Prostate gland (tissue), 2 donors: ENCODE measurements at regions of chr16 and their contacts with region 1.

Region 1: GRCh38 chr16:49663081-49664065 is 192.5 kb downstream of the ZNF423 start:
- DNase-seq: no peak
- H3K4me3 ChIP-seq: peak overlapping the region; percentile 4 to 17
- H3K27ac ChIP-seq: peak overlapping the region; percentile 68 to 73
- H3K4me1 ChIP-seq: no peaks in the 10 kb centered on the region
- H3K27me3 ChIP-seq: no peaks in the 10 kb centered on the region
- CTCF ChIP-seq: no peak
- POLR2A ChIP-seq: no peak

Region 2: DNA sequence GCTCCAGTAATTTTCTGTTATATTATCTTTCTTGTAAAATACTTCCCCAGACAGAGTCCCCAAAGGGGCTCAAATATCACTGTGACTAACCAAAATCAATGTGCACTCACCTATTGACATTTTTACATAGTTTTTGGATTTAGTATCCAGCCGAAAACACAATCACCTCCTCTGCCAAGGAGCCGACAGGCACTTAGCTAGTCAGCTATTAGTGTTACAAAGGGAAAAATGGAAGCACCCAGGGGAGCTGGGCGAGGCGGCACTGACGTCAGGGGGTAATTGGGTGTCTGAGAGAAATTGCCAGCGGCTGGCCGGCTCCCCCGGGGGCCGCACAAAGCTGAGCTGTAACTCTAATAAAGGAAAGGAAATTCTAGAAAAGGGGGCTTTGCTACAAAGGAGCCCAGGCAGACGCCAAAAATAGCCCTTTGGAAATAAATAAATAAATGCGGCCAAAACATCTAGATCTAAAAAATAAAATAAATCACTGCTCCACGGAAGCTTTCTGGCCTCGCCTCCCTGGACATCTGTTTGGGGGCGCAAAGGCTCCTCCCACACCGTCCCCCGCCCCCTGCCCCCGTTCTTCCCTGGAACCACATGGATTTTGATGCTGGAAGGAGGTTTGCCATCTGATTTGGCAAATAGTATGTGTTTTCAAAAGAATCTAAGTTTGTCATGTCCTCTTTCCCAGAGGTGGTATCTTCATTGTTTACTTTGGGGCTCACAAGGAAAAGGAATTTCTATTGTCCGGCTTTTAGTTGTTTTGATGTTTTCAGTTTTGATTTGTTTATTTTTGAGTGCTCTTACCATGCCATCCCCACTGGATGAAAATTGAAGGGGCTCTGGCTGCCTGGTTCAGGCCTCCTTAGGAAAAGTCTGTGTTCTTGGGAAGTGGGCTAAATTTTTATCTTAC is 35.8 kb after region 1 on chr16:
- intact Hi-C with region 1: loop called (anchors 5 kb)
- DNase-seq: no peak
- H3K4me3 ChIP-seq: no peak overlapping the region
- H3K27ac ChIP-seq: peak overlapping the region; percentile 8 to 62
- H3K4me1 ChIP-seq: no peaks in the 10 kb centered on the region
- H3K27me3 ChIP-seq: no peaks in the 10 kb centered on the region
- CTCF ChIP-seq: no peak
- POLR2A ChIP-seq: no peak

Region 3: GRCh38 chr16:49712542-49712941 is 49.2 kb after region 1 on chr16:
- intact Hi-C with region 1: no loop called
- DNase-seq: no peak
- H3K4me3 ChIP-seq: no peak overlapping the region
- H3K27ac ChIP-seq: no peak overlapping the region
- H3K4me1 ChIP-seq: no peaks in the 10 kb centered on the region
- H3K27me3 ChIP-seq: no peaks in the 10 kb centered on the region
- CTCF ChIP-seq: no peak
- POLR2A ChIP-seq: no peak

Region 4: DNA sequence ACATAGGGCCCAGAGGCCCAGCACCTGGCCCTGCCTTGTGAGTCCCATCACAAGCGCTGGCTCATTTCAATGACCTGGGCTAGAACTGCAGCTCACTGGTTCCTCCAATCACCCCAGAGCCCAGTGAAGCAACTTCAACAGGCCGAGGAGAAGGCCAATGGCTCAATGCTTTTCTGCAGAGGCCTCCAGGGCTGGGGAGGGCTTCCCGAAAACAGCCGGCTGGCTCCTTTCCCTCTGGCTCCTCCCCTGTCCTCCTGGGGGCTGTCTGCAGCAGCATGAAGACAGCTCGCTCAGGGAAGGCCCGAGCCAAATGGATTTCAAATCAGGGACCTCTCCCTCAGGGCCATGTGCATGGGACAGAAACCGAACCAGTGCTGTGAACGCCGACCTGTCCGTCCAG is 71.0 kb after region 1 on chr16:
- intact Hi-C with region 1: loop called (anchors 5 kb)
- DNase-seq: no peak
- H3K4me3 ChIP-seq: no peak overlapping the region
- H3K27ac ChIP-seq: peak overlapping the region in 1 of 2 donors; percentile 38
- H3K4me1 ChIP-seq: no peaks in the 10 kb centered on the region
- H3K27me3 ChIP-seq: no peaks in the 10 kb centered on the region
- CTCF ChIP-seq: no peak
- POLR2A ChIP-seq: no peak